PC-3 (cell line): ENCODE measurements at regions of chr15 and their contacts with region 1.

Region 1: GRCh38 chr15:39874890-39875549 is 45.0 kb downstream of the GPR176 start:
- DNase-seq: peak; percentile 69
- ATAC-seq: peak; percentile 81
- H3K4me3 ChIP-seq: no peak overlapping the region
- H3K27ac ChIP-seq: no peak overlapping the region
- H3K4me1 ChIP-seq: peaks cover 13% of the 10 kb centered on the region; the same call in 1 of the 2 replicates
- H3K27me3 ChIP-seq: no peaks in the 10 kb centered on the region
- CTCF ChIP-seq: peak; percentile 87

Region 2: DNA sequence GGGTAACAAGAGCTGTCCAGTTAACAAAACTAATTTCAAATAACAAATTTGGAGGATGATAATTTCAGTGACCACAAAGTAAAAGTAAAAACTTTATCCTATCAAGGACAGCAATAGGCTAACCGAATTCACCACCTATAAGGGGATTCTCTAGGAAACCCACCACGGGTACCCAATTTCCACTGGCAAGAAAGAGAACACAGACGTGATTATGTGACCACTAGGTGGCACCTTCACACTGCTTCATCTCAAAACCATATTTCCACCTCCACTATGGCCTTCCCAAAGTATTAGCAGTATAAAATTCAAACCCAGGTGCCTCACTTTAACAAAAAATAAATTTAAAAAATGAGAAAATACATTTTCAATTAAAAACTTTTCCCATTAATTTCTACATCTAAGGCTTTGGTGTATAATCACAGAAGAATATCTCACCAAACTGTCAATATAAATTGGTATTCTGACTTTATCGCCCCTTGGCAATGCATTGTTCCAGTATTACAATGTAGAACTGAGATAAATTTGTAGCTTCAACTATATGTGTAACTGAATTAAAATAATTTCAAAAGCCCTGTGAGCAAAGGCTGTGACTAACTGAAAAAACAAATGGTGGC is 188.9 kb before region 1 on chr15:
- CTCF ChIA-PET with region 1: no interaction called
- POLR2A ChIA-PET with region 1: no interaction called
- intact Hi-C with region 1: loop called (anchors 5 kb)
- DNase-seq: peak; percentile 70
- ATAC-seq: peak; percentile 80
- H3K4me3 ChIP-seq: no peak overlapping the region
- H3K27ac ChIP-seq: no peak overlapping the region
- H3K4me1 ChIP-seq: no peaks in the 10 kb centered on the region
- H3K27me3 ChIP-seq: no peaks in the 10 kb centered on the region
- CTCF ChIP-seq: peak; percentile 92

Region 3: GRCh38 chr15:39801641-39802309 is 73.2 kb before region 1 on chr15:
- CTCF ChIA-PET with region 1: interaction called, 4 read pairs
- POLR2A ChIA-PET with region 1: no interaction called
- intact Hi-C with region 1: loop called (anchors 1 kb)
- DNase-seq: peak; percentile 65
- ATAC-seq: peak; percentile 81
- H3K4me3 ChIP-seq: no peak overlapping the region
- H3K27ac ChIP-seq: no peak overlapping the region
- H3K4me1 ChIP-seq: no peaks in the 10 kb centered on the region
- H3K27me3 ChIP-seq: no peaks in the 10 kb centered on the region
- CTCF ChIP-seq: peak; percentile 74